ENCODE measurements at regions of chr2 and their contacts with region 1.

Region 1: DNA sequence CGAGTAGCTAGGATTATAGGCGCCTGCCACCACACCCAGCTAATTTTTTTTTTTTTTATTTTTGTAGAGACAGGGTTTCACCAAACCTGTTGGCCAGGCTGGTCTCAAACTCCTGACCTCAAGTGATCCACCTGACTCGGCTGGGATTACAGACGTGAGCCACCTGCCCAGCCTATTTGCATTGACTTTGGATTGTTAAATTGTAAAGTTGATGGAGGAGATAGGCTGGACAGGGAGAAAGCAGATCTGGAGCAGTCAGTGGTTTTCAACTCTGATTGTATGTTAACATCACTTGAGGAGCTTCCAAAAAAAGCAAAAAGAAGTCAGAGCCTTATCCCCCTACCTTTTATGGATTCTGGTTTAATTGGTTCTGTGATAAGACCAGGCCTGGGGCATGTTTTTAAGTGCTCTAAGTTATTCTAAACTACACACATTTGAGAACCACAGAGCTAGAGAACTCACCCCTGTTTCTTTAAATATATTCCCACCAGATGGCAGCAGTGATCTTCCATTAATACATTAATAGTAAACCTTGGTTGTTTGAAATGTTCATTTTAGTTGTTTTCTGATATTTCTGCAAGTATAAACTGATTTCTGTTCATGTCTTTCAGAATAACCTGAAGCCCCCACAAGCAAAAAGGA is 7.5 kb downstream of the C2orf49 start:
- DNase-seq: peak; percentile 61
- ATAC-seq: peak; percentile 89
- H3K4me3 ChIP-seq: no peak overlapping the region
- H3K27ac ChIP-seq: no peak overlapping the region
- H3K4me1 ChIP-seq: no peaks in the 10 kb centered on the region
- H3K27me3 ChIP-seq: no peaks in the 10 kb centered on the region
- CTCF ChIP-seq: peak; percentile 52
- POLR2A ChIP-seq: no peak
- RAD21 ChIP-seq: peak; percentile 60

Region 2: DNA sequence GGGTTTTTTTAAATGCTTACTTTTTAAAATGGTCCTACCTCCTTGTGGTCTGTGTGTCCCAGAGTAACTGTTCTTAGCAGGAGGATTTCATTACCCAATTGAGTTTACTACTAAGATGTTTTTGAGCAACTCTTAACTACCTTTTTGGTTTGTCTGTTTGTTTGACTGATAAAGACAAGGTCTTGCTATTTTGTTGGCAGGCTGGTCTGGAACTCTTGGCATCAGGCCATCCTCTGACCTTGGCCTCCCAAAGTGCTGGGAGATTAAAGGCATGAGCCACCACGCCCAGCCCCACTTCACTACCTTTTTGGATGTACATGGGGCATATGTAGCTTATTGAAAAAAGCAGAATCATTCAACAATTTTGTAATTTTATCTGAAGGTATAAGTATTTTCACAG is 292.1 kb before region 1 on chr2:
- CTCF ChIA-PET with region 1: no interaction called
- POLR2A ChIA-PET with region 1: no interaction called
- dilution Hi-C with region 1: no loop called
- in situ Hi-C with region 1: no loop called
- intact Hi-C with region 1: no loop called
- DNase-seq: no peak
- ATAC-seq: no peak
- H3K4me3 ChIP-seq: no peak overlapping the region
- H3K27ac ChIP-seq: no peak overlapping the region
- H3K4me1 ChIP-seq: no peaks in the 10 kb centered on the region
- H3K27me3 ChIP-seq: no peaks in the 10 kb centered on the region
- CTCF ChIP-seq: no peak
- POLR2A ChIP-seq: no peak
- RAD21 ChIP-seq: no peak

Region 3: GRCh38 chr2:105315314-105315713 is 29.5 kb before region 1 on chr2:
- CTCF ChIA-PET with region 1: no interaction called
- POLR2A ChIA-PET with region 1: no interaction called
- dilution Hi-C with region 1: no loop called
- in situ Hi-C with region 1: no loop called
- intact Hi-C with region 1: no loop called
- DNase-seq: no peak
- ATAC-seq: no peak
- H3K4me3 ChIP-seq: no peak overlapping the region
- H3K27ac ChIP-seq: no peak overlapping the region
- H3K4me1 ChIP-seq: no peaks in the 10 kb centered on the region
- H3K27me3 ChIP-seq: no peaks in the 10 kb centered on the region
- CTCF ChIP-seq: no peak
- POLR2A ChIP-seq: no peak
- RAD21 ChIP-seq: no peak

Region 4: GRCh38 chr2:105521205-105521604 is 176.4 kb after region 1 on chr2:
- CTCF ChIA-PET with region 1: interaction called, 9 read pairs
- POLR2A ChIA-PET with region 1: interaction called, 3 read pairs
- dilution Hi-C with region 1: no loop called
- in situ Hi-C with region 1: no loop called
- intact Hi-C with region 1: loop called (anchors 1 kb)
- DNase-seq: peak; percentile 15
- ATAC-seq: peak; percentile 43
- H3K4me3 ChIP-seq: no peak overlapping the region
- H3K27ac ChIP-seq: no peak overlapping the region
- H3K4me1 ChIP-seq: peaks cover 2% of the 10 kb centered on the region; the same call in 1 of the 2 replicates
- H3K27me3 ChIP-seq: peaks cover 7% of the 10 kb centered on the region; the same call in 1 of the 2 replicates
- CTCF ChIP-seq: peak; percentile 62
- POLR2A ChIP-seq: no peak
- RAD21 ChIP-seq: peak; percentile 76

Region 5: DNA sequence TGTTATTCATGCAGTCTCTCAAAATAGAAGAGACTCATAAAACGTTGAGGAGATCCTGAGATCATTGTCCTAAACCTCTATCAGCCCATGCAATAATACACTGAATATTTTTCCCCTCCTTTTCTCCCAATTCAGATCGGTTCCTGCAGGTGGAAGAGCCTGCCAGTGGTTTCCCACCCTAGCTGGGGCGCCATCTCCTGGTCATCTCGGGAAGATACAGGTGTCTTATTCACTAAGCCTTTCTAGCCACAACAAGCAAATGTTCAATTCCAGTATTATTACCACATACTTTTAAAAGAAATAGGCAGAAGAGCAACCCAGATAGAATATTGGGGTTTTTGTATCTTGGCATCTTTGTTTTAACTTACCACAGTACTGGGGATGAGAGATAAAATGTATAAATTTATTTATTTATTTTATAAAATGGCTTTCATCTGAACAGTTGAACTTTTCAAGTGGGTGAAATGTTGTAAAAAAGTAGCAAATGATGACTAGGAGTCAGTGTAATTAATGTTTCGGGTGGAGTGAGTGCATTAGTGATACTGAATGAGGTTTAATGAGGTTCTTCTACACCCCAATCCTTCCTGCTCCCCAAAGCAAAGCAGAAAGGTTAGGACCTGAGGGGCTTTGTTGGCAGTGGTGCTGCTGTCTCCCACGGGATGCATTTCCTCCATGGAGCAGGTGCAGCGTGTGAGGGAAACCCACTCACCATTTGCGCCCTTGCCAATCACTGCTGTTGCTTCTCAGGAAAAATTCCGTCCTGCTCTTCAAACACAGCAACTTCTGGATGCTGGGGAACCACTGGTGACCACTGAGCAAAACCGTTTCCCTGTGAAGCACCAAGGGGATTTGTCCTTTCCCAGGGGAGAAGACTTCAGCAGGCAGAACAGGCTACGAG is 201.2 kb after region 1 on chr2:
- CTCF ChIA-PET with region 1: no interaction called
- POLR2A ChIA-PET with region 1: no interaction called
- dilution Hi-C with region 1: no loop called
- in situ Hi-C with region 1: no loop called
- intact Hi-C with region 1: loop called (anchors 1 kb)
- DNase-seq: peak; percentile 62
- ATAC-seq: peak; percentile 94
- H3K4me3 ChIP-seq: no peak overlapping the region
- H3K27ac ChIP-seq: no peak overlapping the region
- H3K4me1 ChIP-seq: no peaks in the 10 kb centered on the region
- H3K27me3 ChIP-seq: peaks cover 33% of the 10 kb centered on the region
- CTCF ChIP-seq: peak; percentile 80
- POLR2A ChIP-seq: no peak
- RAD21 ChIP-seq: peak; percentile 73

Region 6: GRCh38 chr2:105858868-105859693 is 514.3 kb after region 1 on chr2:
- CTCF ChIA-PET with region 1: no interaction called
- POLR2A ChIA-PET with region 1: no interaction called
- dilution Hi-C with region 1: no loop called
- in situ Hi-C with region 1: no loop called
- intact Hi-C with region 1: loop called (anchors 10 kb)
- DNase-seq: no peak
- ATAC-seq: no peak
- H3K4me3 ChIP-seq: no peak overlapping the region
- H3K27ac ChIP-seq: no peak overlapping the region
- H3K4me1 ChIP-seq: peaks cover 3% of the 10 kb centered on the region; the same call in 1 of the 2 replicates
- H3K27me3 ChIP-seq: no peaks in the 10 kb centered on the region
- CTCF ChIP-seq: no peak
- POLR2A ChIP-seq: no peak
- RAD21 ChIP-seq: no peak

Region 7: DNA sequence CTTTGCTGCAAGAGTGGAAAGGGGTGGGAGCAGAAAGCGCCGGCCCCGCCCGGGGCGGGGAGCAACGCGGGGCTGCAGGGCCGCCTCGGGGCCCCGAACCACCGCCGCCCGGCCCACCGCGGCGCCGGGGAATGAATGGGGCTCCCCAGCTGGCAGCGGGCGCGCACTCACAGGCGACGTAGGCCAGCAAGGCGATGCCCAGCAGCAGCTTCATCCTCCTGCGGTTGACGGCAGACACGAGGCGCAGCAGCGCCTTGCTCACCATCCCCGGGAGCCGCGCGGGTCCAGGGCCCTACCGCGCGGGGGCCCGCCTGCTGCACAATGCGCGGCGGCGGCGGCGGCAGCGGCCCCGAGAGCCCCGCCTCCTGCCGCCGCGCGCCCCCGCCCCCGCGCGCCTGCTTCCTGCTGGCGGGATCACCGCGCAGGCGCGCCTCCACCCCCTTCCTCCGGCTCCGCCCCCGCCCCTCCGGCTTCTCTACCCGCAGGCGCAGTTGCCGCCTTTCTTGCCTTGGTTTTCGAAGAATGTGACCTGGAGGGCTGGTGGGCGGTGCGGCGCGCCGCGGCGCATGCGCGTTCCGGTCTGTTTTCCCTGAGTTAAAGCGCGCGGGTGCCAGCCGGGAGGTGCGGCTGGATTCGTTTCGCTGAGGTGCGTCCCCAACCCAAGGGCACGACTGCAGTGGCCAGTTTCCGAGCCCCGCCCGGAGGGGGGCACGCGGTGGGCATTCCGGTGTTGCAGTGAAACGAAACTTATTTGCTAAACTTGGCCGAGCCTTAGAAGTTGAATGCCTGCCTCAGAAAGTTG is 849.4 kb after region 1 on chr2 and contains the start of gene UXS1:
- CTCF ChIA-PET with region 1: no interaction called
- POLR2A ChIA-PET with region 1: no interaction called
- dilution Hi-C with region 1: no loop called
- in situ Hi-C with region 1: no loop called
- intact Hi-C with region 1: no loop called
- DNase-seq: peak; percentile 96
- ATAC-seq: peak; percentile 80
- H3K4me3 ChIP-seq: peak within 1 kb of the TSS; percentile 90
- H3K27ac ChIP-seq: peak within 1 kb of the TSS; percentile 94
- H3K4me1 ChIP-seq: peaks cover 13% of the 10 kb centered on the region
- H3K27me3 ChIP-seq: no peaks in the 10 kb centered on the region
- CTCF ChIP-seq: no peak
- POLR2A ChIP-seq: peak; percentile 55
- RAD21 ChIP-seq: no peak
- total RNA-seq, gene UXS1: 24.7 and 33.7 TPM in 2 replicates

Region 8: DNA sequence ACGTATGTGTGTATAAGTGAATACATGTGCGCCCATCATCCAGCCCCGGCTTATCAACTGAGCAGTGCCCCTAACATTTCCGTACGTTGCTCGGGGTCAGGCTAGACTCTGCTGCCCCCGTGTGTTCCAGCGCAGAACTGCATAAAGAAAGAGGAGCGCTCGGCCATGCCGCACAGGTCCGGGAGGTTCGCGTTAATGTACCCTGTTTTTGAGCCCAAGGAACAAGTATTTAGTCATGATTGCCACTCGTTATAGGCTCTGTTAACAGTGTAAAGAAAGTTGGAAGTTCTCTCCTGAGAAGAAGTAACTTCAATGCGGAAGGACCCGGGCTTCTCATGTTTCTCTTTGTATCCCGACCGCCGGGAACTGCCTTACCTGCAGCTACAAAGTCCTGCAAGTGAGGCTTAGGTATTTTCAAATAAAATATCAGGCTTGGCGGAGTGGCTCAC is 1198.0 kb after region 1 on chr2:
- CTCF ChIA-PET with region 1: no interaction called
- POLR2A ChIA-PET with region 1: no interaction called
- dilution Hi-C with region 1: no loop called
- in situ Hi-C with region 1: no loop called
- intact Hi-C with region 1: no loop called
- DNase-seq: peak; percentile 19
- ATAC-seq: peak; percentile 100
- H3K4me3 ChIP-seq: no peak overlapping the region
- H3K27ac ChIP-seq: no peak overlapping the region
- H3K4me1 ChIP-seq: no peaks in the 10 kb centered on the region
- H3K27me3 ChIP-seq: peaks cover 6% of the 10 kb centered on the region
- CTCF ChIP-seq: peak; percentile 80
- POLR2A ChIP-seq: no peak
- RAD21 ChIP-seq: peak; percentile 82

Measured in IMR-90 (cell line).